Activated CD8-positive, alpha-beta T cell treated with anti-CD3 and anti-CD28 coated beads for 36 hours (primary cell): ENCODE measurements at regions of chr15 and their contacts with region 1.

Region 1: GRCh38 chr15:52261498-52262242 is 33.9 kb downstream of the MYO5C start:
- DNase-seq: peak; percentile 87
- ATAC-seq: peak; percentile 99
- H3K4me3 Mint-ChIP-seq: peak overlapping the region; percentile 56
- H3K27ac Mint-ChIP-seq: peak overlapping the region; percentile 93
- H3K4me1 Mint-ChIP-seq: peaks cover 45% of the 10 kb centered on the region
- H3K27me3 Mint-ChIP-seq: no peaks in the 10 kb centered on the region
- CTCF ChIP-seq: peak; percentile 28

Region 2: GRCh38 chr15:52528991-52529926 is 267.6 kb after region 1 on chr15:
- CTCF ChIA-PET with region 1: interaction called, 3 read pairs
- POLR2A ChIA-PET with region 1: interaction called, 3 read pairs
- intact Hi-C with region 1: loop called (anchors 10 kb)
- DNase-seq: peak; percentile 83
- ATAC-seq: peak; percentile 88
- H3K4me3 Mint-ChIP-seq: peak overlapping the region; percentile 76
- H3K27ac Mint-ChIP-seq: peak overlapping the region; percentile 88
- H3K4me1 Mint-ChIP-seq: peaks cover 30% of the 10 kb centered on the region
- H3K27me3 Mint-ChIP-seq: peaks cover 8% of the 10 kb centered on the region
- CTCF ChIP-seq: no peak

Region 3: DNA sequence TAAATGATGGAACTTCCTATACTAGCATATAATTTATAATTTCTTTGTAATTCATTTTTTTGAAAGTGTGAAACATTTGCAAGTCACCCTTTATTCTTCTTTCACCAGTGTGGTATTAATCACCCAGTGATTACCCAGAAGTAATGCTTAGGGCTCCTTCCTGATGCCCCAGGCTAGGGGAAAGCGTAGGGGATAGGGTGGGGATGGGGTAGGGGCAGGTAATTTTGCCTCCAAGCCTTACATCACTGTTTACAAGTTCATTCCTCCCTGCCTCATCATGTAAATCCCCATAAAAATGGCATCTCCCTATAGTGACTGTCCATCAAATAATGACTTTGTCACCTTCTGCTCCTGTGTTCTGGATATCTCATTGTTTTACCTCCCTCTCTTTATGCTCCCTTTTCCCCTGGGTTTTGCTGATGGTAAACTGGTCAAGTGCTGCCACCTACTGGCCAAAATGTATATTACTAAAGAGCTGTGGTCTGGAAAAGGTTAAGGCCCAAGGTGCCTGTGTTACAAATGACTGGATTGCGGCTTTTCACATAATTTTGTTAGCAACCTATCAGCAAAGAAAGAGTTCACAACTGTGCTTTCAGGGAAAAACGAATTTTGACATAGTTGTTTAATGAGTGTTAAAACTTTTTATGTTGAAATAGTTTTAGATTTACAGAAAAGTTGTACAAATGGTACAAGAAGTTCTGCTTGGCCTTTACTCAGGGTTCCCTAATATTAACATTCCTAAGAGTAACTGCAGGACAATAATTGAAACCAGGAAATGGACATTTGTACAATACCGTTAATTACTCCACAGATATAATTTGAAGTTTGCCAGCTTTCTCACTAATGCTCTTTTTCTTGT is 473.8 kb after region 1 on chr15:
- CTCF ChIA-PET with region 1: interaction called, 49 read pairs
- POLR2A ChIA-PET with region 1: no interaction called
- intact Hi-C with region 1: loop called (anchors 2 kb)
- DNase-seq: peak; percentile 81
- ATAC-seq: peak; percentile 92
- H3K4me3 Mint-ChIP-seq: no peak overlapping the region
- H3K27ac Mint-ChIP-seq: no peak overlapping the region
- H3K4me1 Mint-ChIP-seq: peaks cover under 1% of the 10 kb centered on the region
- H3K27me3 Mint-ChIP-seq: no peaks in the 10 kb centered on the region
- CTCF ChIP-seq: peak; percentile 90